ENCODE measurements at regions of chr10 and their contacts with region 1.

Region 1: GRCh38 chr10:101012525-101013364 is 13.1 kb downstream of the LZTS2 start:
- H3K4me3 Mint-ChIP-seq: no peak overlapping the region
- H3K27ac Mint-ChIP-seq: peak overlapping the region; percentile 53
- H3K4me1 Mint-ChIP-seq: peaks cover 36% of the 10 kb centered on the region
- H3K27me3 Mint-ChIP-seq: peaks cover 32% of the 10 kb centered on the region

Region 2: DNA sequence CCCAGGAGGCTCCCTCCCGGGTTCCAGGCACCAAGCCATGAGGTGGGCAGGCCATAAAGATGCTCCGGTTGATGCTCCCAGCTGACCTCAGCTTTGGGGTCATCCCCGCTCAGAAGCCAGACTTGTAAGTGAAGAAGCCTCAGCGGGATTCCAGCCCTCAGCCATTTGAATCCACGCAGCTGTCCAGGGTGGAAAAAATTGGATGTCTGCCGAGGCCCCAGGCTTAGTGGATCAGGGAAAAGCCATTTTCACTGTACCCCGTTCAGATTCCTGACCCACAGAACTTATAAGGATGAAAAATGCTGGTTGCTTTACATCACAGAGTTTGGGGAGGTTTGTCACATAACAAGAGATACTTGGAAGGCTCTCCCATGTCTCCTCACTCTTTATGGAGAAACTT is 881.9 kb before region 1 on chr10:
- intact Hi-C with region 1: no loop called
- H3K4me3 Mint-ChIP-seq: no peak overlapping the region
- H3K27ac Mint-ChIP-seq: no peak overlapping the region
- H3K4me1 Mint-ChIP-seq: no peaks in the 10 kb centered on the region
- H3K27me3 Mint-ChIP-seq: peaks cover 14% of the 10 kb centered on the region

Region 3: DNA sequence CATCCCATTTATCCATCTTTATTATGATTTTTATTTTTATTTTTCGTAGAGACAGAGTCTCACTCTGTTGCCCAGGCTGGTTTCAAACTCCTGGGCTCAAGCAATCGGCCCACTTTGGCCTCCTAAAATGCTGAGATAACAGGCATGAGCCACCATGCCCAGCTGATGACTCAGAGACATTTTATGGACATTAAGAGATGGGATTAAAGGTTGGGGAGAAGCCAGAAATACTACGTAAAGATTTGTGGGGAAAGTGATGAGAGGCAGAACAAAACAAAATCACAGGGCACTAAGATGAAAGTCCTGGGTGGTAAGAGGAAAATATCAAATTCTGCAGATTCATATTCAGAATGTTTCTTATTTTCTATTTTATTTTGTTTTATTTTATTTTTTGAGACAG is 542.4 kb before region 1 on chr10:
- intact Hi-C with region 1: no loop called
- H3K4me3 Mint-ChIP-seq: no peak overlapping the region
- H3K27ac Mint-ChIP-seq: no peak overlapping the region
- H3K4me1 Mint-ChIP-seq: no peaks in the 10 kb centered on the region
- H3K27me3 Mint-ChIP-seq: peaks cover 28% of the 10 kb centered on the region

Region 4: DNA sequence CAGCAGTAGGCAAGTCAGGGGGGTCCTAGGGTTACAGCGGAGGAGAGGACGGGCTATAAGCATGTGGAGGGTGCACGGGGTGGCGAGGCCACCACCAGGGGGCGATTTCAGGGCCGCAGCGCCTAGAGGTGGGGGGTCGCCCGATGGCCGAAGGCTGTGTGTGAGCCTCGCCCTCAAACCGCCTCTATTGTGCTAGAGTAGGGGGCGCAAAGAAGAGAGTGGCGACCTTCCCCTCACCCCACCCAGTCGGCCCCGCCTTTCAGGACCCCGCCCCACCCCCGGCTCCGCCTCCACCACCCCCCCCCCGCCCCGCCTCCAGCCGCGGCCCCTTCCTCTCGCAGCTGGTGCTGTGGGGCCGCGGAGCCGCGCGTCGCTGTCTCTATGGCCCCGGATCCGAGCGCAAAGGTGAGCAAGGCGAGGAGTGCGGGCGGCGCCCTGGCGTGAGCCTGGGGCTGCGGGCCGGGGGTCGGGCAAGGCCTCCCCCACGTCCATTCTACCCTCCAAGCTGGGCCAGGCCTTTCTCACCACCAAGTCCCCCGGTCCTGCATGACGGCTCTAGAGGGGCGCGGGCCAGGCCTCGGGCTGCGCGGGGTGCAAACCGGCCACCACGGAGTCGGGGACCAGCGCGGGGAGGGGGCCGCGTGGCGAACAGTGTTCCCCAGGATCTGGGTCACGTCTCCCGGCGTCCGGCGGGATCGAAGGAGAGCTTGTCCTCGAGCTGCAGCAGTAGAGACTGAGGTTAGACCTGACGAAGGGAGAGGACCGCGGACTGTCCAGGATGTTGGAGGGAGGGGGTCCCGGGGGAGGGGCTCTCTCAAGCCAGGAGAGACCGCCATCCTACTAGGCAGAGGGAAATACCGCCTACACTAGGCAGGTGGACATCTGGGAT is 43.3 kb before region 1 on chr10 and contains the start of gene SEMA4G:
- intact Hi-C with region 1: loop called (anchors 10 kb)
- H3K4me3 Mint-ChIP-seq: peak within 1 kb of the TSS; percentile 64
- H3K27ac Mint-ChIP-seq: peak within 1 kb of the TSS; percentile 35
- H3K4me1 Mint-ChIP-seq: peaks cover 27% of the 10 kb centered on the region
- H3K27me3 Mint-ChIP-seq: peaks cover 23% of the 10 kb centered on the region

Region 5: GRCh38 chr10:100998991-100999741 is 13.6 kb before region 1 on chr10:
- intact Hi-C with region 1: loop called (anchors 1 kb)
- H3K4me3 Mint-ChIP-seq: peak overlapping the region; percentile 91
- H3K27ac Mint-ChIP-seq: peak overlapping the region; percentile 71
- H3K4me1 Mint-ChIP-seq: peaks cover 47% of the 10 kb centered on the region
- H3K27me3 Mint-ChIP-seq: peaks cover 7% of the 10 kb centered on the region